ENCODE measurements at regions of chr10 and their contacts with region 1.

Region 1: DNA sequence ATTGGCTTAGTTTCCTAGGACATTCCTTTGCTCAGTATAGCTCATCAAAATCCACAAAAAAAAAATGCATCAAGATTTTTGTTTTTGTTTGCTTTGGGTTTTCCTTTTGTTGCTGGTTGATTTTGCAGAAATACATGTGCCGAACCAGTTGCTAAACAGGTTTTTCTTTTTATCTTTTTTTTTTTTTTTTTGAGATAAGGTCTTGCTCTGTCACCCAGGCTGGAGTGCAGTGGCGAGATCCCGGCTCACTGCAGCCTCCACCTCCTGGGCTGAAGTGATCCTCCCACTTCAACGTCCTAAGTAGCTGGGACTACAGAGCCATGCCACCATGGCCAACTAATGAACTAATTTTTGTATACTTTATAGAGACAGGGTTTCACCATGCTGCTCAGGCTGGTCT is 8.3 kb downstream of the CSTF2T start:
- DNase-seq: peak; percentile 34
- ATAC-seq: no peak
- H3K4me3 ChIP-seq: no peak overlapping the region
- H3K27ac ChIP-seq: no peak overlapping the region
- H3K4me1 ChIP-seq: peaks cover 11% of the 10 kb centered on the region
- H3K27me3 ChIP-seq: no peaks in the 10 kb centered on the region
- CTCF ChIP-seq: no peak

Region 2: DNA sequence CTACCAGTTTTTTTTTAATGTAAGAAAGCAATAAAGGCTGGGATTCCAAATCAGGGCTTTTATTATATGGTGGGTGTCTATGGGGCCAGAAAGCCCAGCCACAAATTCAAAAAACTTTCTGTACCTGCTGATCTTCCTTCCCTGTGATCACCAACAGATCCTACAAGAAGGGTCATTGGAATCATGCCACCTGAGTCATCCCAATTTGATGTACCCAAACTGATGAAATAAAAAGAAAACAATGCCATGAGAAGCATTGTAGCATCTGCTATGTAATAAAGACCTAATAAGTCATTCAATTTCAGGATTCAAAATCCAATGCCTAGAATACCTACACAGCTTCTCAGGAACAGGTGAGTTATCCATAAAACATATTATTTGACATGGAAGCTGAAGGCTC is 851.8 kb after region 1 on chr10:
- CTCF ChIA-PET with region 1: no interaction called
- POLR2A ChIA-PET with region 1: interaction called, 14 read pairs
- intact Hi-C with region 1: no loop called
- DNase-seq: peak; percentile 95
- ATAC-seq: peak; percentile 23
- H3K4me3 ChIP-seq: no peak overlapping the region
- H3K27ac ChIP-seq: no peak overlapping the region
- H3K4me1 ChIP-seq: peaks cover 33% of the 10 kb centered on the region
- H3K27me3 ChIP-seq: no peaks in the 10 kb centered on the region
- CTCF ChIP-seq: no peak

Measured in PC-3 (cell line).